ENCODE measurements at regions of chr19 and their contacts with region 1.

Region 1: DNA sequence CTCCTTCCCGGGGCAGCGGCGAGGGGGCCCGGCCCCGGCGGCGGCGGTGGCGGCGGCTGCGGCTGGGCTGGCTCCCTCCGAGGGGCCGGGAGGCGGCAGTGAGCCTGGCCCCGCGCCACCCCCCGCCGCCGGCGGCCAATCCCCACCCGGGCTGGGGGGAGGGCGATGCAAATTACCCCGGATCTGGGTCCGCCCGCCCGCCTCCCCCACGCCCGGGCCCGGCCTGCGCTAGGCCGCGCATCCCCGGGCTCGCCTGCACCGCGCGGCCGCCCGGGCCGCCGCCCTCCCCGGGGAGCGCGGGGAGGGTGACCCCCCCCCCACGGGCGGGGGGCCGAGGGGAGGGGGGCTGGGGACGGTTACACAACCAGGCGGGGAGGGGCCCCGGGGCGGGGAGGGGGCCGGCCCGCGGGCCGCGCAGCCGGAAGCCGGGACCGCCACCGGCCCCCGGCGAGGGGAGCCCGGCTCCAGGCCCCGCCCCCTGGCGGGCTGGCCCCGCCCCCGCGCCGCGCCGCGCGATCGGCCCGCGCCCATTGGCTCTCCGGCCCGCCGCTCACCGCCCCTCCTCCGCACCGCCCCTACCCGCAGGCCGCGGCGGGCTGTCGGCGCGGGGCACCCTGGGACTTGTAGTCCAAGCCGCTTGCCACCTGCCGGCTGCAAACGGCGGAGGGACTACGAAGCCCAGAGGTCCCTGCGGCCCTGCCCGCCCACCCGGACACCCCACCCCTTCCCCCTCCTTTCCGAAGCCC is 1.1 kb downstream of the ZBTB7A start:
- DNase-seq: peak; percentile 100
- ATAC-seq: peak; percentile 62
- H3K4me3 Mint-ChIP-seq: peak overlapping the region; percentile 61
- H3K27ac Mint-ChIP-seq: peak overlapping the region; percentile 54
- H3K4me1 Mint-ChIP-seq: peaks cover 22% of the 10 kb centered on the region
- H3K27me3 Mint-ChIP-seq: no peaks in the 10 kb centered on the region

Region 2: DNA sequence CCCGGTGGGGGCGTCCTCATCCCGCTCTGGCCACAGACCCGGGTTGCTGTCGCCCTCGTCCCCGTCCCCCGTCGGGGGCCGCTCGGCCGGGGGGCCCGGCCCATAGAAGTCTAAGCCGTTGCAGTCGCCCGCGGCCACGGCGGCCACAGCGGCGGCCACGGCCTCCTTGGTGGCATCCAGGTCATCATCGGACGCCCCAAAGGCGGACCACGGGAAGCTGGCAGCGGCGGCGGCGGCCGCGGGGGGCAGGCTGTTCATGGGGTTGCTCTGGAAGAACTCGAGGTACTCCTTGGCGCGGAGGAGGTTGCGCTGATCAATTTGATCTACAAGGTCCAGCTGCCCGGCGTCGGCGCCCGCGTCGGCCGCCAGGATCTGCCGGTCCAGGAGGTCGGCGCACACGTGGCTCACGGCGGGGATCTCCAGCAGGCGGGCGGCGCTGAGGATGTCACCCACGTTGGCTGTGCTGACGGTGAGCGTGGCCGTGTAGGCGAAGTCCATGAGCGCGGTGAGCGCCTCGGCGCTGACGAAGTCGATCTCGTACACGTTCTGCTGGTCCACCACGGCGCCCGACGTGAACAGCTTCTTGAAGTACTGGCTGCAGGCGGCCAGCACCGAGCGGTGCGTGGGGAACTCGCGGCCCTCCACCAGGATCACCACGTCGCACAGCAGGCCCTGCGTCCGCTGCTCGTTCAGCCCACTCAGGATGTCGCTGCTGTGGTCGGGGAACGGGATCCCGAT is 11.0 kb before region 1 on chr19:
- POLR2A ChIA-PET with region 1: no interaction called
- DNase-seq: no peak
- ATAC-seq: no peak
- H3K4me3 Mint-ChIP-seq: no peak overlapping the region
- H3K27ac Mint-ChIP-seq: no peak overlapping the region
- H3K4me1 Mint-ChIP-seq: peaks cover 26% of the 10 kb centered on the region
- H3K27me3 Mint-ChIP-seq: no peaks in the 10 kb centered on the region

Region 3: GRCh38 chr19:4077882-4078614 is 12.4 kb after region 1 on chr19:
- POLR2A ChIA-PET with region 1: interaction called, 36 read pairs
- DNase-seq: peak; percentile 70
- ATAC-seq: peak; percentile 73
- H3K4me3 Mint-ChIP-seq: peak overlapping the region; percentile 87
- H3K27ac Mint-ChIP-seq: peak overlapping the region; percentile 95
- H3K4me1 Mint-ChIP-seq: peaks cover 48% of the 10 kb centered on the region
- H3K27me3 Mint-ChIP-seq: no peaks in the 10 kb centered on the region

Region 4: GRCh38 chr19:4089400-4089908 is 23.9 kb after region 1 on chr19:
- POLR2A ChIA-PET with region 1: interaction called, 58 read pairs
- DNase-seq: peak; percentile 82
- ATAC-seq: peak; percentile 69
- H3K4me3 Mint-ChIP-seq: peak overlapping the region; percentile 81
- H3K27ac Mint-ChIP-seq: peak overlapping the region; percentile 92
- H3K4me1 Mint-ChIP-seq: peaks cover 39% of the 10 kb centered on the region
- H3K27me3 Mint-ChIP-seq: no peaks in the 10 kb centered on the region

Region 5: DNA sequence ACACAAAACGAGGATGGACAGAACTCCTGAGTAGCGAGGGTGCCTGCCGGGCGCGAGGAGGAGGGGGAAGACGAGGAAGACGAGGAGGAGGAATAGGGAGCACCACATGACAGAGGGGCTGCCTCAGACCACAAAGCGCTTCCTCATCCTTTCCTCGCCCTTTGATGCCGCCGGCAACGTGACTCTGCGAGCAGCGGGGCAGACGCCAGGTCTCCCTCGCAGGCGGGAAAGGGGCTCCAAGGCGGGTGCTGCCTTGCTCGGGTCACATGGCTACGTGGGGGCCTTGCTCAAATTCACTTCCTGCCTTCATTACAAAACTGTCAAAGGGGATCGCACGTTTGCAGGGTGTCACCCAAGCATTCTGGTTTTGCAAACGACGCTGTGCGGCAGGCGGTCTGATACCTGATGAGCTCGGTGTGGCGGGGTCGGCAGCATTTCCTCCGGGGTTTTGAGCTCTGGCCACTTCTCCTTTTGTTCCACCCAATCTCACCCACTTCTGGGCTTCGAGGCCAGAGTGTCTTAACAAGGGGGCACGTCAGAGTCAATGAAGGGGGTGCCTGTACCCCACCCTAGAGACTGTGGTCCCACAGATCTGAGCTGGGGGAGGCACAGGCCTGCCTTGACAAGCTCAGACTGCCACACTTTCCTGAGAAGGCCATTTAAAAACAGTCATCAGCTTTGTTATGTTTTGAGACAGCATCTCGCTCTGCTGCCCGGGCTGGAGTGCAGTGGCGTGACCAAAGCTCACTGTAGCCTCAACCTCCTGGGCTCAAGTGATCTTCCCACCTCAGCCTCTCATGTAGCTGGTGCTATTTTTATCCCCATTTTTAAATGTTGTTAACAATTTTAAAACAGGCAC is 43.4 kb after region 1 on chr19:
- POLR2A ChIA-PET with region 1: interaction called, 29 read pairs
- DNase-seq: peak; percentile 80
- ATAC-seq: peak; percentile 72
- H3K4me3 Mint-ChIP-seq: peak overlapping the region; percentile 71
- H3K27ac Mint-ChIP-seq: peak overlapping the region; percentile 99
- H3K4me1 Mint-ChIP-seq: peaks cover 59% of the 10 kb centered on the region
- H3K27me3 Mint-ChIP-seq: no peaks in the 10 kb centered on the region

Region 6: DNA sequence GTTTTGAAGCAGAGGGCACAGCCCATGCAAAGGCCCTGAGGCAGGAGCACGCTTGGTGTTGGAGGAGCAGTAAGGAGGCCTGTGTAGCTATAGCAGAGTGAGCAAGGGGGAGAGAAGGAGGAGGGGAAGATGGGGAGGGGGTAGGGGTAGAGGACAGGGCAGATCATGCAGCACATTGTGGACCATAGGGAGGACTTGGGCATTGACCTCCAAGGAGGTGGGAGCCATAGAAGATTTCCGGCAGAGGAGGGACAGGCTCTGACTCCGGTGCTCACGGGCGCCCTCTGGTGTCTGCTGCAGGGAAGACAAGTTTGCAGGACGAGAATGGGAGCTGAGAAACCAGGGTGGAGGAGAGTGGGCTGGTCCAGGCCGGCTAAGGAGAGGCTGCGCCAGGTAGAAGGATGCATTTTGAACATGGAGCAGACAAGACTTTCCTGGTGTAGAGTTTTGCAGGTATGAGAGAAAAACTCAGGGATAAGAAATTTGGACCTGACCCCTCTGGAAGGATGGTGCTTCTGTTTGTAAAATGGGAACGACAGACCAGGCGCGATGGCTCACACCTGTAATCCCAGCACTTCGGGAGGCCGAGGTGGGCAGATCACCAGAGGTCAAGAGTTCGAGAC is 74.1 kb after region 1 on chr19:
- POLR2A ChIA-PET with region 1: interaction called, 10 read pairs
- DNase-seq: peak; percentile 95
- ATAC-seq: peak; percentile 89
- H3K4me3 Mint-ChIP-seq: peak overlapping the region; percentile 53
- H3K27ac Mint-ChIP-seq: peak overlapping the region; percentile 18
- H3K4me1 Mint-ChIP-seq: peaks cover 10% of the 10 kb centered on the region
- H3K27me3 Mint-ChIP-seq: peaks cover 17% of the 10 kb centered on the region

Region 7: GRCh38 chr19:4182084-4182810 is 116.6 kb after region 1 on chr19 and contains the starts of genes ANKRD24 and SIRT6:
- POLR2A ChIA-PET with region 1: no interaction called
- DNase-seq: peak; percentile 97
- ATAC-seq: peak; percentile 85
- H3K4me3 Mint-ChIP-seq: peak within 1 kb of the TSS; percentile 99
- H3K27ac Mint-ChIP-seq: peak within 1 kb of the TSS; percentile 99
- H3K4me1 Mint-ChIP-seq: peaks cover 24% of the 10 kb centered on the region
- H3K27me3 Mint-ChIP-seq: no peaks in the 10 kb centered on the region
- total RNA-seq, gene ANKRD24: 1.5 to 1.7 TPM
- total RNA-seq, gene SIRT6: 30.1 to 37.5 TPM

Measured in activated naive CD8-positive, alpha-beta T cell treated with anti-CD3 and anti-CD28 coated beads, Interleukin-2, amount 10 ng/mL, durations not matched to agents 7 days and 5 days (primary cell).